ENCODE measurements at regions of chr10 and their contacts with region 1.

Region 1: GRCh38 chr10:30359373-30360206 is 10.5 kb upstream of the MTPAP start:
- DNase-seq: peak; percentile 71
- CTCF ChIP-seq: peak; percentile 90

Region 2: GRCh38 chr10:30348378-30348776 is 11.2 kb before region 1 on chr10:
- CTCF ChIA-PET with region 1: interaction called, 64 read pairs
- POLR2A ChIA-PET with region 1: interaction called, 5 read pairs
- DNase-seq: no peak
- CTCF ChIP-seq: no peak

Region 3: GRCh38 chr10:30374353-30374752 is 14.8 kb after region 1 on chr10:
- CTCF ChIA-PET with region 1: interaction called, 34 read pairs
- POLR2A ChIA-PET with region 1: no interaction called
- DNase-seq: no peak
- CTCF ChIP-seq: no peak

Region 4: GRCh38 chr10:30404540-30404939 is 45.0 kb after region 1 on chr10:
- CTCF ChIA-PET with region 1: no interaction called
- POLR2A ChIA-PET with region 1: no interaction called
- DNase-seq: no peak
- CTCF ChIP-seq: no peak